ENCODE measurements at regions of chr6 and their contacts with region 1.

Region 1: DNA sequence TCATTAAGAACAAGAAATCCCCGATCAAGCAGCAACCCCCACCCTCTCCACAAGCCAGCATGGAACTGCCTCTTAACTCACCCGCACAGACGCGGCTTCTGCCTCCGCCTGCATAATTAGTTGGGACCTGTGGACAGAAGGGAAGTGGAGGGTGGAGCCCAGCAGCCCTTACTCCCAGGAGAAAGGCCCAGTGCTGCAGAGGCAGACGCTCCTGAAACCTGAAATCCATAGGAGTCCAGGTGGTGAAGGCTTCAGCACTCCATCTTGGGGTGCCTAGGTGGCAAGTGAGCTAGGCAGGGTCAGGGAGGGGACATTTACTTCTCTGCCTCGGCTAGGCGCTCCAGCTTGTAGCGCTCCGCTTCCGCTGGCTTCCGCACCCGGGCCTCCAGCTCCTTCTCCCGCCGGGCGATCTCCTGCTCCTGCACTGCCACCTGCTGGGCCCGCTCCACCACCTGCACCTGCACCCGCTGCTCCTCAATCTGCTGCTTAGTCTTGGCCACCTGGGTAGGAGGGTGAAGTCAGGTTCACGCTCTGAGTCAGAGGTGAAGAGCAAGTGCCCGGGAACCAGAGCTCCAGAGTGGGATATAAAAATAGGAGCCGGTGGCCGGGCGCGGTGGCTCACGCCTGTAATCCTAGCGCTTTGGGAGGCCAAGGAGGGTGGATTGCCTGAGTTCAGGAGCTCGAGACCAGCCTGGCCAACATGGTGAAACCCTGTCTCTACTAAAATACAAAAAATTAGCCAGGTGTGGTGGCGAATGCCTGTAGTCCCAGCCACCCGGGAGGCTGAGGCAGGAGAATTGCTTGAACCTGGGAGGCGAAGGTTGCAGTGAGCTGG is 10.7 kb downstream of the TUBB start:
- DNase-seq: peak; percentile 62 to 86 (median 81)
- ATAC-seq: peak; percentile 97
- H3K4me3 ChIP-seq: no peak overlapping the region
- H3K4me3 Mint-ChIP-seq: peak overlapping the region in 9 of 10 donors; percentile 27 to 69 (median 55)
- H3K27ac ChIP-seq: peak overlapping the region; percentile 52
- H3K27ac Mint-ChIP-seq: peak overlapping the region in 7 of 9 donors; percentile 29 to 79 (median 73)
- H3K4me1 ChIP-seq: peaks cover 14 to 30% of the 10 kb centered on the region in 2 donors
- H3K4me1 Mint-ChIP-seq: peaks cover 27 to 54% (median 42%) of the 10 kb centered on the region in 7 donors
- H3K27me3 ChIP-seq: no peaks in the 10 kb centered on the region
- H3K27me3 Mint-ChIP-seq: no peaks in the 10 kb centered on the region

Region 2: DNA sequence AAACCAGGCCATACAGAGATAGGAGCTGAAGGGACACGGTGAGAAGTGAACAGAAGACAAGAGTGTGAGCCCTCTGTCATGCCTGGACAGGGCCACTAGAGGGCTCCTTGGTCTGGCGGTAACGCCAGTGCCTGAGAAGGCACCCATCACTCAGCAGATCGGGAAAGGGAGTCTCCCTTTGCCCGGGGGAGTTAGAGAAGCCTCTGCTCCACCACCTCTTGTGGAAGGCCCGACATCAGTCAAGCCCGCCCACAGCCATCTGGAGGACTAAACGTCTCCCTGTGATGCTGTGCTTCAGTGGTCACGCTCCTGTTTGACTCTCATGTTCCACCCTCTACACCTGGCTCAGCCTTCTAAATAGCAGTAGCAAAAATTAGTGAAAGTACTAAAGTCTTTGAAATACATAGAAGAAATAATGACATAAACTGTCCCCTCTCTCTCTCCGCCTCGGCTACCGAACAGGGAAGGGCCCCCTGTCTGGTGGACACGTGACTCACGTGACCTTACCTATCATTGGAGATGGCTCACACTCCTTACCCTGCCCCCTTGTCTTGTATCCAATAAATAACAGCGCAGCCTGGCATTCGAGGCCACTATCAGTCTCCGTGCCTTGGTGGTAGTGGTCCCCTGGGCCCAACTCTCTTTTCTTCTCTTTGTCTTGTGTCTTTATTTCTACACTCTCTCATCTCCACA is 319.2 kb before region 1 on chr6:
- CTCF ChIA-PET with region 1: no interaction called
- POLR2A ChIA-PET with region 1: no interaction called
- intact Hi-C with region 1: loop called in 1 of 2 experiments (anchors 2 kb)
- DNase-seq: peak; percentile 26 to 63 (median 52)
- ATAC-seq: peak; percentile 73
- H3K4me3 ChIP-seq: no peak overlapping the region
- H3K4me3 Mint-ChIP-seq: peak overlapping the region; percentile 2 to 69 (median 52)
- H3K27ac ChIP-seq: no peak overlapping the region
- H3K27ac Mint-ChIP-seq: peak overlapping the region in 2 of 9 donors; percentile 53 to 76
- H3K4me1 ChIP-seq: peaks cover 3 to 5% of the 10 kb centered on the region in 2 donors
- H3K4me1 Mint-ChIP-seq: peaks cover 4 to 11% (median 8%) of the 10 kb centered on the region in 7 donors
- H3K27me3 ChIP-seq: peaks cover 0 to 7% of the 10 kb centered on the region in 2 donors
- H3K27me3 Mint-ChIP-seq: peaks cover 45 to 77% (median 66%) of the 10 kb centered on the region in 5 donors

Region 3: DNA sequence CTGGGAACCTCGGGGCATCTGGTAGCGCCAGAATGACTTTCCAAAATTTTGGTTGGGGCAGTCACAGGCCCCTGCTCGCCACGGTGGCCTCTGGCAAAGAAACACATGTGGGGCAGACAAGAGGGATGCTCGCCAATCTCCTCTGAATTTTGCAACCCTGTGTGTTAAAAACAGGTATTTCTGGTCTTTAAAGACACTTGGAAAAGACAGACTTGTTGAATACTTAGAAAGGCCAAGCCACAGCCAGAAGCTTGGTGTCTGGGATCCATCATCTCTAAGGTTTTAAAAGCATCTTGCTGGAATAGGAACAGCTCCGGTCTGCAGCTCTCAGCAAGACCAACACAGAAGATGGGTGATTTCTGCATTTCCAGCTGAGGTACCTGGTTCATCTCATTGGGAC is 210.3 kb before region 1 on chr6:
- CTCF ChIA-PET with region 1: no interaction called
- POLR2A ChIA-PET with region 1: no interaction called
- intact Hi-C with region 1: no loop called
- DNase-seq: no peak
- ATAC-seq: no peak
- H3K4me3 ChIP-seq: no peak overlapping the region
- H3K4me3 Mint-ChIP-seq: peak overlapping the region in 3 of 10 donors; percentile 16 to 79 (median 42)
- H3K27ac ChIP-seq: no peak overlapping the region
- H3K27ac Mint-ChIP-seq: peak overlapping the region in 5 of 9 donors; percentile 30 to 73 (median 66)
- H3K4me1 ChIP-seq: peaks cover 5 to 31% of the 10 kb centered on the region in 2 donors
- H3K4me1 Mint-ChIP-seq: peaks cover 22 to 69% (median 57%) of the 10 kb centered on the region in 7 donors
- H3K27me3 ChIP-seq: no peaks in the 10 kb centered on the region
- H3K27me3 Mint-ChIP-seq: peaks cover 0 to 4% (median 0%) of the 10 kb centered on the region in 5 donors

Region 4: DNA sequence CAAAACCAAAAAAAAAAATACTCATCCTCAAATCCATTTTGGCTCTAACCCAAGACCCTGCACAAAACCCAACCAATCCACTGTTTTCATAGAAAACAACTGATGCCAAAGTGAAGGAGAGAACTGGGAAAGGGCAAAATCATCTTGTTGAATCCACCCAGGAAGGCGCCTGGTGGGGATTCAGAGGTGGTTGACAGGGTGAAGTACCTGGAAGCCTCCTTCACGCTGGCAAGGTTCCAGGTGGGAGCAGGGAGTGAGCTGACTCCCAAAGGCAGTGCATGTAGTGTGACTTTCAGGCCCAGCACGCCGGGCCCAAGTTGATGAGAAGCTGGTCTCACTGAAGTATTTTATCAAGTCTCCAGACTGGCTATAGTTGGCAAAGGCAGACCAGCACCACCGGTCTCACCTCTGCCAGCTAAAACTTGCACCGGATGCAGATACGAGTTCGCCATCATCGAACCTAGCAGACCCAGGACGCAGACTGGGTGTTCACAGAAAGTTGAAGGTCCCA is 130.3 kb before region 1 on chr6:
- CTCF ChIA-PET with region 1: interaction called, 16 read pairs
- POLR2A ChIA-PET with region 1: no interaction called
- intact Hi-C with region 1: no loop called
- DNase-seq: no peak
- ATAC-seq: no peak
- H3K4me3 ChIP-seq: no peak overlapping the region
- H3K4me3 Mint-ChIP-seq: no peak overlapping the region
- H3K27ac ChIP-seq: peak overlapping the region; percentile 47
- H3K27ac Mint-ChIP-seq: peak overlapping the region in 7 of 9 donors; percentile 58 to 85 (median 79)
- H3K4me1 ChIP-seq: peaks cover 3 to 5% of the 10 kb centered on the region in 2 donors
- H3K4me1 Mint-ChIP-seq: peaks cover 16 to 35% (median 25%) of the 10 kb centered on the region in 7 donors
- H3K27me3 ChIP-seq: no peaks in the 10 kb centered on the region
- H3K27me3 Mint-ChIP-seq: no peaks in the 10 kb centered on the region

Region 5: GRCh38 chr6:30626484-30627366 is 104.1 kb before region 1 on chr6 and contains the start of gene ATAT1:
- CTCF ChIA-PET with region 1: interaction called, 4 read pairs
- POLR2A ChIA-PET with region 1: interaction called, 4 read pairs
- intact Hi-C with region 1: loop called in 1 of 2 experiments (anchors 1 kb)
- DNase-seq: peak; percentile 80 to 90 (median 85)
- ATAC-seq: peak; percentile 100
- H3K4me3 ChIP-seq: peak within 1 kb of the TSS; percentile 84
- H3K4me3 Mint-ChIP-seq: peak within 1 kb of the TSS; percentile 88 to 97 (median 92)
- H3K27ac ChIP-seq: peak within 1 kb of the TSS; percentile 92
- H3K27ac Mint-ChIP-seq: peak within 1 kb of the TSS; percentile 89 to 97 (median 96)
- H3K4me1 ChIP-seq: peaks cover 10 to 13% of the 10 kb centered on the region in 2 donors
- H3K4me1 Mint-ChIP-seq: peaks cover 15 to 35% (median 24%) of the 10 kb centered on the region in 7 donors
- H3K27me3 ChIP-seq: no peaks in the 10 kb centered on the region
- H3K27me3 Mint-ChIP-seq: no peaks in the 10 kb centered on the region
- total RNA-seq, gene ATAT1: 7.0 to 12.0 (median 9.5) TPM

Region 6: GRCh38 chr6:30678964-30679726 is 51.7 kb before region 1 on chr6:
- CTCF ChIA-PET with region 1: interaction called, 48 read pairs
- POLR2A ChIA-PET with region 1: interaction called, 499 read pairs
- intact Hi-C with region 1: no loop called
- DNase-seq: peak; percentile 86 to 97 (median 92)
- ATAC-seq: peak; percentile 65
- H3K4me3 ChIP-seq: peak overlapping the region; percentile 98
- H3K4me3 Mint-ChIP-seq: peak overlapping the region; percentile 90 to 100 (median 97)
- H3K27ac ChIP-seq: peak overlapping the region; percentile 95
- H3K27ac Mint-ChIP-seq: peak overlapping the region; percentile 85 to 99 (median 97)
- H3K4me1 ChIP-seq: peaks cover 5 to 24% of the 10 kb centered on the region in 2 donors
- H3K4me1 Mint-ChIP-seq: peaks cover 20 to 47% (median 38%) of the 10 kb centered on the region in 7 donors
- H3K27me3 ChIP-seq: no peaks in the 10 kb centered on the region
- H3K27me3 Mint-ChIP-seq: no peaks in the 10 kb centered on the region

Region 7: DNA sequence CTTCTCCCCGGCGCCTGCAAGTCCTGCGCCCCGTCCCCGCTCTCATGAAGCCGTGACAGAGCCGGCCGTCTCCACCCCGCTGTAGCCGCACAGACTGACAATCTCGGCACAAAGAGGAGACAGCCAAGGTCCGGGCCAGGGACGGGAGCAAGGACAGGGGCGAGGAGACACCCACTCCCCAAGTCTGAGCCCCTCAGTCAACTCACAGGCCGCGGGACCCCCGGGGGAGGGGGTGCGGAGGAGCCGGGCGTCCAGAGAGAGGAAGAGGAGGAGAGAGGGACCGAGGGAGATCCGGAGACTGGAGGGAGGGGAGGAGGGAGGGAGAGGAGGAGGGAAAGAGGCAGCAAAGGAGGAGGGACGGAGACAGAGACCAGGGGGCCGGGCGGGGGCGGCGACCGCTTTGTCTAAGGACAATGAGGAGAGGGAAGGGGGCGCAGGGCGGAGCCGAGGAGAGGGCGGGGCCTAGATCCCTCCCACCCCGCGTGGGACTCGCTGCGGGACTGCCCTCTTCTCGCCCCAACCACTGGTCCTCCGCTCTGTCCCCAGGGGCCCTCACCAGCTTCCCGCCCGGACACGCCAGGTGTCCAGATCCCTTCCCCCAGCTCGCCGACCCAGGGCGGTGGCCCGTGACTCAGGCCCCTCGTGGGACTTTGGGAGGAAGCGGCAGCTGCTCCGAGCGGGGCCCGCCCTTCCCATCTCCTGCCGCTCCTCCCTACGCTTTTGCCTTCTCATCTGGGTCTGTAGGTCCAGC is 43.7 kb before region 1 on chr6:
- CTCF ChIA-PET with region 1: interaction called, 22 read pairs
- POLR2A ChIA-PET with region 1: interaction called, 499 read pairs
- intact Hi-C with region 1: no loop called
- DNase-seq: peak; percentile 34 to 89 (median 42)
- ATAC-seq: peak; percentile 58
- H3K4me3 ChIP-seq: peak overlapping the region; percentile 98
- H3K4me3 Mint-ChIP-seq: peak overlapping the region; percentile 90 to 100 (median 97)
- H3K27ac ChIP-seq: peak overlapping the region; percentile 95
- H3K27ac Mint-ChIP-seq: peak overlapping the region; percentile 88 to 99 (median 97)
- H3K4me1 ChIP-seq: peaks cover 21 to 31% of the 10 kb centered on the region in 2 donors
- H3K4me1 Mint-ChIP-seq: peaks cover 45 to 56% (median 46%) of the 10 kb centered on the region in 7 donors
- H3K27me3 ChIP-seq: no peaks in the 10 kb centered on the region
- H3K27me3 Mint-ChIP-seq: no peaks in the 10 kb centered on the region

Region 8: DNA sequence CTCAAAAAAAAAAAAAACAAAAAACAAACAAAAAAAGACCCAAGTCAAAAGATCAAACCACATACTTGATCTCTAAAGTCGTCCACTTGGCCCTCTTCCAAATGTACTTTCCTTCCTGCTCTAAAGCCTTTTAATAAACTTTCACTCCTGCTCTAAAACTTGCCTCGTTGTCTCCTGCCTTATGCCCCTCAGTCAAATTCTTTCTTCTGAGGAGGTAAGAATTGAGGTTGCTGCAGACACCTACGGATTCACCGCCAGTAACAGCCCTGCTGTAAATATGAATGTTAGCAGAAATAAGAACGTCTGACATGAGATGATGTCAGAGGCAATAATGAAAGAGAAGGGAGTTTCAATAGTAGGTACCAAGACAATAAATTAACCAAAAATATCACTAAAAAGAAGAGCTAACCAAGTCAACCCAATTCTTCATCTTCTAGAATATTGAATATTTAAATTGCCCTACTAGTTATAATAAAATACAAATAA is 366.8 kb after region 1 on chr6:
- CTCF ChIA-PET with region 1: no interaction called
- POLR2A ChIA-PET with region 1: no interaction called
- intact Hi-C with region 1: no loop called
- DNase-seq: peak in 5 of 9 donors; percentile 11 to 30 (median 22)
- ATAC-seq: no peak
- H3K4me3 ChIP-seq: no peak overlapping the region
- H3K4me3 Mint-ChIP-seq: peak overlapping the region in 9 of 10 donors; percentile 42 to 81 (median 60)
- H3K27ac ChIP-seq: no peak overlapping the region
- H3K27ac Mint-ChIP-seq: peak overlapping the region in 8 of 9 donors; percentile 19 to 93 (median 72)
- H3K4me1 ChIP-seq: peaks cover 28 to 39% of the 10 kb centered on the region in 2 donors
- H3K4me1 Mint-ChIP-seq: peaks cover 16 to 54% (median 44%) of the 10 kb centered on the region in 7 donors
- H3K27me3 ChIP-seq: no peaks in the 10 kb centered on the region
- H3K27me3 Mint-ChIP-seq: peaks cover 0 to 21% (median 0%) of the 10 kb centered on the region in 5 donors